ENCODE measurements at regions of chr7 and their contacts with region 1.

Region 1: DNA sequence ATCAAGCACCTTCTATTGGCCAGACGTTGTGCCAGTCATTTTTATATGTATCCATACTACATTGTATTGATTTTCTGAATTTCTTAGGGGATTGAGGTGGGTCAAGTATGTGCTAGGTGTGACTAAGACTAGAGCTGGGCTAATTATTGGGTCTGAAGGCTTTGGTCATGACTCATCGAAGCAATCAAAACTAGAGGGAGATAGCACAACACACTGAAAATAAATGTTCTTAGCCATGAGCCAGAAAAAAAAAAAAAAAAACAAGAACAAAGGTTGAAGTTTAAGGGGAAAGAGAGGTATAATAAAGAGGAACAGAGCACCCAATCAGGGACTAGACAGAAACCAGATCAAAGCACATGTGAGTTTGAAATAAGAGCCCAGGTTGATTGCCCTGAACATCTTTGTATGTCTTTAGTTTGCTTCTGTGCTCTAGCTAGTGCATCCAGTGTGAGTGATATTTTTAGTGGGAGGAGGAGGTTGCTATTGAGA is 171.6 kb upstream of the FOXP2 start:
- DNase-seq: no peak
- H3K4me3 Mint-ChIP-seq: no peak overlapping the region
- H3K27ac Mint-ChIP-seq: no peak overlapping the region
- H3K4me1 Mint-ChIP-seq: no peaks in the 10 kb centered on the region
- H3K27me3 Mint-ChIP-seq: no peaks in the 10 kb centered on the region

Region 2: GRCh38 chr7:114196517-114196916 is 46.5 kb before region 1 on chr7:
- intact Hi-C with region 1: no loop called
- DNase-seq: no peak
- H3K4me3 Mint-ChIP-seq: no peak overlapping the region
- H3K27ac Mint-ChIP-seq: no peak overlapping the region
- H3K4me1 Mint-ChIP-seq: no peaks in the 10 kb centered on the region
- H3K27me3 Mint-ChIP-seq: no peaks in the 10 kb centered on the region

Region 3: GRCh38 chr7:114293289-114294012 is 50.4 kb after region 1 on chr7:
- intact Hi-C with region 1: loop called (anchors 10 kb)
- DNase-seq: no peak
- H3K4me3 Mint-ChIP-seq: no peak overlapping the region
- H3K27ac Mint-ChIP-seq: no peak overlapping the region
- H3K4me1 Mint-ChIP-seq: no peaks in the 10 kb centered on the region
- H3K27me3 Mint-ChIP-seq: no peaks in the 10 kb centered on the region